ENCODE measurements at regions of chr6 and their contacts with region 1.

Region 1: DNA sequence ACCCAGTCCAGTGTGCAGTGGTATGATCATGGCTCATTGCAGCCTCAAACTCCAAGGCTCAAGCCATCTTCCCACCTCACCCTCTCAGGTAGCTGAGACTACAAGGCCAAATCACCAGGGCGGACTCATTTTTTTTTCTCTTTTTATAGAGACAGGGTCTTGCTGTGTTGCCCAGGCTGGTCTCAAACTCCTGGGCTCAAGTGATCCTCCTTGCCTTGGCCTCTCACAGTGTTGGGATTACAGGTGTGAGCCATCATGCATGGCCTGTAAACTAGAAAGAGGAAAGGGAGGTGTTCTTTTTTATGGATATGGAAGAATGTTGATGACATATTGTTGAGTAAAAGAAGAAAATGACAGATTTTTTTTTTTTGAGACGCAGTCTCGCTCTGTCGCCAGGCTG is 5.1 kb upstream of the BEND3 start:
- DNase-seq: no peak
- H3K4me3 ChIP-seq: no peak overlapping the region
- H3K27ac ChIP-seq: no peak overlapping the region
- H3K4me1 ChIP-seq: peaks cover 11% of the 10 kb centered on the region
- H3K27me3 ChIP-seq: no peaks in the 10 kb centered on the region
- CTCF ChIP-seq: no peak

Region 2: GRCh38 chr6:107144014-107144413 is 23.6 kb after region 1 on chr6:
- CTCF ChIA-PET with region 1: interaction called, 12 read pairs
- POLR2A ChIA-PET with region 1: no interaction called
- intact Hi-C with region 1: no loop called
- DNase-seq: no peak
- H3K4me3 ChIP-seq: no peak overlapping the region
- H3K27ac ChIP-seq: no peak overlapping the region
- H3K4me1 ChIP-seq: no peaks in the 10 kb centered on the region
- H3K27me3 ChIP-seq: no peaks in the 10 kb centered on the region
- CTCF ChIP-seq: no peak

Region 3: DNA sequence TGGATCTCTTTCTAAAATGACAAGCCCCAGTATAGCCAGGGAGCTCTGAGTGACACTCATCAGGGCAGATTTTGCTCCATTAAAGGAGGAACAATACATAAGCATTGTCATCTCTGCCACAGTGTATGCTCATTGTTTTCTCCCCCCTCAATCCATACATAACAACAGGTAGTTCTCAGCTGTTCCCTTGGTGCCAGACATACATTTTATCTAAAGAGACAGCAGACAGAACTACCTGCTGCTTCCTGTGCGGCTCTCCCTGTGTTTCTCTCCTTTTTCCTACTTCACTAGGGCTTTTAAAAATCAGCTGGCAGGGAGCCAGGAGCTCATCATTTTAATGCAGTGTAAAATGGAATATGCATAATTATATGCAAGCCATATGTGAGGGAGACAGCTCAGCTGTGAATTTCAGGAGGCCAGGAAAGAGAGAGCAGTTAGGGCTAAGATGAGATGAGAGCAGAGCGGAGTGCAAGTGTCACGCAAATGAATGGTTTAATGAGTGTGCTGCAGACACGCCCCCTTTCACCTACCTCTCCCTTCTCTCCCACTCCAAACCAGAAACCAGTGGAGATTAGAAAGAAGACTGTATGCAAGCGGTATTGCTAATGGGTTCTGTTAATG is 465.5 kb after region 1 on chr6:
- CTCF ChIA-PET with region 1: no interaction called
- POLR2A ChIA-PET with region 1: no interaction called
- intact Hi-C with region 1: no loop called
- DNase-seq: peak; percentile 56
- H3K4me3 ChIP-seq: no peak overlapping the region
- H3K27ac ChIP-seq: no peak overlapping the region
- H3K4me1 ChIP-seq: peaks cover 26% of the 10 kb centered on the region
- H3K27me3 ChIP-seq: no peaks in the 10 kb centered on the region
- CTCF ChIP-seq: no peak

Measured in A673 (cell line).